CD4-positive, alpha-beta T cell (primary cell): ENCODE measurements at regions of chr1 and their contacts with region 1.

Region 1: DNA sequence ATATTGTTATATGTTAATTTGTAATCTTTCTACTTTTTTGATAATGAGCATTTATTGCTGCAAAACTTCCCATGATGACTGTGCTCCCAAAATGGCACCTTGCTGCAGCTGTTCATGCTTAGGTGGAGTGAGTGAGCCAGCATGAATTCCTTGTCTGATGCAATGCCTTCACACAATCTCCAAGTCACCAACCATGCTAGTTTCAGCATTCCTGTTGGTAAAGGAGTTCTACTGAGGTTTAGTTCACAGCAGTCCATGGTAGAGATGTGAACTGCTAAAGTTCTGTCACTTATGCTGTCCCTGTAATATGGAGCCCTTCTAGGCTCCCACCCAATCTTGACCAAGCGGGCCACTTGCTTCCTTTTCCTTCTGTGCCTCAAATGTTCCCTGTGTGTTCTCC is 26.2 kb upstream of the PRKACB start:
- DNase-seq: no peak
- ATAC-seq: no peak
- H3K4me3 ChIP-seq: no peak overlapping the region
- H3K4me3 Mint-ChIP-seq: no peak overlapping the region
- H3K27ac ChIP-seq: no peak overlapping the region
- H3K27ac Mint-ChIP-seq: no peak overlapping the region
- H3K4me1 ChIP-seq: no peaks in the 10 kb centered on the region
- H3K4me1 Mint-ChIP-seq: peaks cover 16% of the 10 kb centered on the region
- H3K27me3 ChIP-seq: no peaks in the 10 kb centered on the region
- H3K27me3 Mint-ChIP-seq: no peaks in the 10 kb centered on the region
- CTCF ChIP-seq: no peak

Region 2: DNA sequence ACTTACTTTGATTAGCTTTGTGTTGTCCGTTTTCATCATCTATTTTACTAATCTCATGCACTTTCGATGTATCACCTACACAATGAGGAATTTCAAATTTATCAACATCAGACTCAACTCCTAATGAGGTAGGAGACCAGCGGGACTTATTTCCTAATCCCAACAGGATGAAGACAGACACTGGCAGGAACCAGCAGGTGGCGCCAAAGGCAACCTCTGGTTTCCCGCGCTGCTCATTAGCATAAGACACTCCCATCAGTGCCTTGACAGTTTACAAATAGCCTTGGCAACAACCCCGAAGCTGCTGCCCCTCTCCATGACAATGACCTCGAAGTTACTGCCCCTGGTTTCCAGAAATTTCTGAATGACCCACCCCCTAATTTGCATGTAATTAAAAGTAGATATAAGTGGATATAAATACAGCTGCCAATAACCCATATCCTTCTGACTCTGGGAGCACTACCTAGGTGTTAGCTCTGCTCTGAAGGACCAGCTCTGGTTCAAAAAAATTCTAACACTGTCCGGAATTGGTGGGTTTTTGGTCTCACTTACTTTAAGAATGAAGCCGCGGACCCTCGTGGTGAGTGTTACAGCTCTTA is 1342.4 kb before region 1 on chr1:
- CTCF ChIA-PET with region 1: no interaction called
- POLR2A ChIA-PET with region 1: no interaction called
- intact Hi-C with region 1: loop called in 1 of 2 experiments (anchors 10 kb)
- DNase-seq: peak in 7 of 14 experiments; percentile 2 to 37 (median 11)
- ATAC-seq: no peak
- H3K4me3 ChIP-seq: no peak overlapping the region
- H3K4me3 Mint-ChIP-seq: no peak overlapping the region
- H3K27ac ChIP-seq: no peak overlapping the region
- H3K27ac Mint-ChIP-seq: no peak overlapping the region
- H3K4me1 ChIP-seq: no peaks in the 10 kb centered on the region
- H3K4me1 Mint-ChIP-seq: no peaks in the 10 kb centered on the region
- H3K27me3 ChIP-seq: no peaks in the 10 kb centered on the region
- H3K27me3 Mint-ChIP-seq: no peaks in the 10 kb centered on the region
- CTCF ChIP-seq: peak; percentile 16

Region 3: DNA sequence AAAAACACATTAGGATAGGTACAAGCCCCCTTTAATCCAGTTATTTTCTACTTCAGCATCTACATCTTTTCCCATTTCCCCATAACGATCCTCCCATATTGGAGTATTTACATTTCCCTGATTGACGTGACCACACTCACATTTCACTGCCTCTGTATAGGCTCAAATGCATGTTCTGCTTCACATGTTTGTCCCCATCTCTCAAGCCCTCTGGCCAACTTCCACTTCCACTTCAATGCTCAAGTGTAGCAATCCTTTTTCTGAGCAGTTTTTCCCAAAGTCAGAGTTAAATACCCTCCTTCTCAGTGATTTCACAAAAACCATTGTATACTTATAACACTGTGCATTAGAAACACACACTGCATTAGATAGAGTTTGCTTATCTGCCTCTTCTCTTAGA is 57.1 kb before region 1 on chr1:
- CTCF ChIA-PET with region 1: no interaction called
- POLR2A ChIA-PET with region 1: no interaction called
- intact Hi-C with region 1: no loop called
- DNase-seq: no peak
- ATAC-seq: no peak
- H3K4me3 ChIP-seq: no peak overlapping the region
- H3K4me3 Mint-ChIP-seq: no peak overlapping the region
- H3K27ac ChIP-seq: no peak overlapping the region
- H3K27ac Mint-ChIP-seq: no peak overlapping the region
- H3K4me1 ChIP-seq: no peaks in the 10 kb centered on the region
- H3K4me1 Mint-ChIP-seq: no peaks in the 10 kb centered on the region
- H3K27me3 ChIP-seq: peaks cover 0 to 6% of the 10 kb centered on the region in 2 experiments
- H3K27me3 Mint-ChIP-seq: peaks cover 21% of the 10 kb centered on the region
- CTCF ChIP-seq: no peak

Region 4: GRCh38 chr1:84133479-84133878 is 15.6 kb after region 1 on chr1:
- CTCF ChIA-PET with region 1: no interaction called
- POLR2A ChIA-PET with region 1: no interaction called
- intact Hi-C with region 1: no loop called
- DNase-seq: no peak
- ATAC-seq: no peak
- H3K4me3 ChIP-seq: no peak overlapping the region
- H3K4me3 Mint-ChIP-seq: no peak overlapping the region
- H3K27ac ChIP-seq: no peak overlapping the region
- H3K27ac Mint-ChIP-seq: no peak overlapping the region
- H3K4me1 ChIP-seq: no peaks in the 10 kb centered on the region
- H3K4me1 Mint-ChIP-seq: peaks cover 13% of the 10 kb centered on the region
- H3K27me3 ChIP-seq: no peaks in the 10 kb centered on the region
- H3K27me3 Mint-ChIP-seq: no peaks in the 10 kb centered on the region
- CTCF ChIP-seq: no peak